ENCODE measurements at regions of chr4 and their contacts with region 1.

Region 1: DNA sequence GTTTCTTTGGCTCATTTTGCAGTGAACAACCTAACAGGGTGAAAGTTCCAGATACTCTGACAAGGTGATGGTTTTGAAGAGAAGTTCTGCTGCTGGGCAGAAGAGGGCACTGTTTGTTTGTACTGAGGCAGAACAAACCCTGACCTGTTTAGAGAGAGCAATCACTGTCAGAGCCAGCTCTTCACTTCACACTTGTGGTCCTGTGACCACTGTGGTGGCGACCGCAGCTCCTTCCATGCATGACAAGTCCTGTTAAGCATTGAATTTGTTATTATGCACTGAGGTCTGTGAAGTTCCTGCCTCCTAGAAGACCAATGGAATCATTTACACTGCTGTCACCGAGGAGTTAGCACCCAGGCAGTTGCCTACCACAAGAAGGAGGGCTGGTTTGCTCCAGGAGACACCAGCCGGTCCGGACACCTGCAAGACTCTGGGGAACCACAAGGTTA is 86.6 kb downstream of the ZNF330 start:
- DNase-seq: peak; percentile 60 to 80 (median 64)
- H3K4me3 ChIP-seq: no peak overlapping the region
- H3K4me3 Mint-ChIP-seq: no peak overlapping the region
- H3K27ac ChIP-seq: no peak overlapping the region
- H3K27ac Mint-ChIP-seq: no peak overlapping the region
- H3K4me1 ChIP-seq: no peaks in the 10 kb centered on the region
- H3K4me1 Mint-ChIP-seq: peaks cover 0 to 5% (median 2%) of the 10 kb centered on the region in 4 donors
- H3K27me3 ChIP-seq: no peaks in the 10 kb centered on the region
- H3K27me3 Mint-ChIP-seq: peaks cover 0 to 3% of the 10 kb centered on the region in 2 donors

Region 2: GRCh38 chr4:140556372-140557085 is 750.7 kb before region 1 on chr4:
- CTCF ChIA-PET with region 1: no interaction called
- POLR2A ChIA-PET with region 1: no interaction called
- intact Hi-C with region 1: no loop called
- DNase-seq: peak; percentile 29 to 61 (median 47)
- H3K4me3 ChIP-seq: no peak overlapping the region
- H3K4me3 Mint-ChIP-seq: peak overlapping the region in 4 of 8 donors; percentile 18 to 41 (median 28)
- H3K27ac ChIP-seq: no peak overlapping the region
- H3K27ac Mint-ChIP-seq: peak overlapping the region in 2 of 7 donors; percentile 18
- H3K4me1 ChIP-seq: peaks cover 18% of the 10 kb centered on the region
- H3K4me1 Mint-ChIP-seq: peaks cover 9 to 27% (median 16%) of the 10 kb centered on the region in 4 donors
- H3K27me3 ChIP-seq: no peaks in the 10 kb centered on the region
- H3K27me3 Mint-ChIP-seq: no peaks in the 10 kb centered on the region

Region 3: GRCh38 chr4:141229408-141230101 is 77.7 kb before region 1 on chr4:
- CTCF ChIA-PET with region 1: no interaction called
- POLR2A ChIA-PET with region 1: no interaction called
- intact Hi-C with region 1: no loop called
- DNase-seq: no peak
- H3K4me3 ChIP-seq: no peak overlapping the region
- H3K4me3 Mint-ChIP-seq: no peak overlapping the region
- H3K27ac ChIP-seq: no peak overlapping the region
- H3K27ac Mint-ChIP-seq: peak overlapping the region in 3 of 7 donors; percentile 0 to 76 (median 5)
- H3K4me1 ChIP-seq: no peaks in the 10 kb centered on the region
- H3K4me1 Mint-ChIP-seq: peaks cover 5 to 14% (median 12%) of the 10 kb centered on the region in 4 donors
- H3K27me3 ChIP-seq: no peaks in the 10 kb centered on the region
- H3K27me3 Mint-ChIP-seq: no peaks in the 10 kb centered on the region

Region 4: DNA sequence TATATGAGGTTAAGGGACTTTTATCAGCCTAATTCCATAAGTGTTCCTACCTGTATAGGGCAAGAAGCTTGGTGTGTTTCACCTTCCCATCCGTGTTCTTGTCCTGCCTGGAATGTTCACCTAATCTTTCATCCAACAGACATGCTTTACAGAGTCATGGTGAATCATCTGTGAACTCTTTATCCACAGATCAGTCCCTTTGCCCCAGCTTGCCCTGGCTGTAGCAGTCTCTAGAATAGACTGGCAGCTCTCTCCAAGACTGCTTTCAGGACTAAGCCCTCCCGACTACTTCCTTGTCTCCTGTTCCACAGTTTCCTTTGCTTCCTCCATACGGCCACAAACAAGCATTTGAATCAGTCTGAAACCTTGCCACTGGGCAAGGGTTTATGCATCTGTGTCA is 151.2 kb after region 1 on chr4:
- CTCF ChIA-PET with region 1: no interaction called
- POLR2A ChIA-PET with region 1: no interaction called
- intact Hi-C with region 1: no loop called
- DNase-seq: no peak
- H3K4me3 ChIP-seq: no peak overlapping the region
- H3K4me3 Mint-ChIP-seq: no peak overlapping the region
- H3K27ac ChIP-seq: no peak overlapping the region
- H3K27ac Mint-ChIP-seq: no peak overlapping the region
- H3K4me1 ChIP-seq: no peaks in the 10 kb centered on the region
- H3K4me1 Mint-ChIP-seq: no peaks in the 10 kb centered on the region
- H3K27me3 ChIP-seq: no peaks in the 10 kb centered on the region
- H3K27me3 Mint-ChIP-seq: peaks cover 0 to 3% of the 10 kb centered on the region in 2 donors

Region 5: DNA sequence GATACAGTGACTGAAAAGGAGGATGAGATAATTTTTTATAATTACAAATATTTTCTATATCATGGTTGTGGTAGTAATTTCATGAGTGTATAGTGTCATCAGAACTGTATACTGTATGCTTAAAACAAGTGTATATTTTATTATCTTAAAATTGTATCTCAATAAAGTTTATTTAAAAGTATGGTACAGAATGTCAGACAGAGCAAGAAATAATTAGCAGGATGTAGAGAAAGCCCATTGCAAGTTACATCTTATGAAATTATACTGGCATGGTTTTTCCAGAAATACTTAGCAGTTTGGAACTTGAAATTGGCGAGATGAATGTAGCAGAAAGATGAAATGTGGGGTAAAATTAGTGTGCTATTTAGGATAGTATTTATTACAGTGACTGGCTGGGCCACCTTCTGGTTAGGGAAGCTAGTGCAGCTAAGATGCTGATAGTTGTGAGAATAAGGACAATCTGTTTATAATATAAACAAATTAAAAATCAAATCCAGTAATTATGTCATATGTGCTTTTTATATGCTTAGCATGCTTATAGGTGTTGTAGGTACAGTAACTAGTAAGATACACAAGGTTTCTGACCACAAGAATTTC is 403.8 kb after region 1 on chr4:
- CTCF ChIA-PET with region 1: interaction called, 4 read pairs
- POLR2A ChIA-PET with region 1: no interaction called
- intact Hi-C with region 1: loop called (anchors 2 kb)
- DNase-seq: no peak
- H3K4me3 ChIP-seq: no peak overlapping the region
- H3K4me3 Mint-ChIP-seq: no peak overlapping the region
- H3K27ac ChIP-seq: no peak overlapping the region
- H3K27ac Mint-ChIP-seq: peak overlapping the region in 1 of 7 donors; percentile 19
- H3K4me1 ChIP-seq: no peaks in the 10 kb centered on the region
- H3K4me1 Mint-ChIP-seq: peaks cover 0 to 9% (median 3%) of the 10 kb centered on the region in 4 donors
- H3K27me3 ChIP-seq: no peaks in the 10 kb centered on the region
- H3K27me3 Mint-ChIP-seq: no peaks in the 10 kb centered on the region

Region 6: DNA sequence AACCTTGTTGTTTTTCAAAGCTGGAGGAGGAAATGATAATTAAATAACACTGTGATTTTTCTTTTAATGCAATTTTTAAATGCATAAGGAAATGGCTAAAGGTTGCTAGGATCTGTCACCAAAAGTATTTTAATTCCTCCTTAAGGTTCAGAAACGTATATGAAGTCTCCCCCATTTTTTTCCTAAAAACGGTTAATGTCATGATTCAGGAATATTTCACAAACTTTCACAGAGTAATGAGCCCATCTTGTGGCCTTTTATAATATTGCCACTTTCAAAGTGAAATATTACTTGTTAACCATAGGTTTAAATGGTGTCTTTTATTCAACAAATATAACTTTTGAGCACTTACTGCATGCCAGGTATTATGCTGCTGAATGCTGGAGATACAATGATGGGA is 1778.0 kb after region 1 on chr4:
- CTCF ChIA-PET with region 1: no interaction called
- POLR2A ChIA-PET with region 1: no interaction called
- intact Hi-C with region 1: loop called (anchors 10 kb)
- DNase-seq: no peak
- H3K4me3 ChIP-seq: no peak overlapping the region
- H3K4me3 Mint-ChIP-seq: no peak overlapping the region
- H3K27ac ChIP-seq: no peak overlapping the region
- H3K27ac Mint-ChIP-seq: no peak overlapping the region
- H3K4me1 ChIP-seq: no peaks in the 10 kb centered on the region
- H3K4me1 Mint-ChIP-seq: no peaks in the 10 kb centered on the region
- H3K27me3 ChIP-seq: no peaks in the 10 kb centered on the region
- H3K27me3 Mint-ChIP-seq: peaks cover 0 to 6% of the 10 kb centered on the region in 2 donors

Measured in CD4-positive, alpha-beta memory T cell (primary cell).